Natural killer cell (primary cell): ENCODE measurements at regions of chr9 and their contacts with region 1.

Region 1: DNA sequence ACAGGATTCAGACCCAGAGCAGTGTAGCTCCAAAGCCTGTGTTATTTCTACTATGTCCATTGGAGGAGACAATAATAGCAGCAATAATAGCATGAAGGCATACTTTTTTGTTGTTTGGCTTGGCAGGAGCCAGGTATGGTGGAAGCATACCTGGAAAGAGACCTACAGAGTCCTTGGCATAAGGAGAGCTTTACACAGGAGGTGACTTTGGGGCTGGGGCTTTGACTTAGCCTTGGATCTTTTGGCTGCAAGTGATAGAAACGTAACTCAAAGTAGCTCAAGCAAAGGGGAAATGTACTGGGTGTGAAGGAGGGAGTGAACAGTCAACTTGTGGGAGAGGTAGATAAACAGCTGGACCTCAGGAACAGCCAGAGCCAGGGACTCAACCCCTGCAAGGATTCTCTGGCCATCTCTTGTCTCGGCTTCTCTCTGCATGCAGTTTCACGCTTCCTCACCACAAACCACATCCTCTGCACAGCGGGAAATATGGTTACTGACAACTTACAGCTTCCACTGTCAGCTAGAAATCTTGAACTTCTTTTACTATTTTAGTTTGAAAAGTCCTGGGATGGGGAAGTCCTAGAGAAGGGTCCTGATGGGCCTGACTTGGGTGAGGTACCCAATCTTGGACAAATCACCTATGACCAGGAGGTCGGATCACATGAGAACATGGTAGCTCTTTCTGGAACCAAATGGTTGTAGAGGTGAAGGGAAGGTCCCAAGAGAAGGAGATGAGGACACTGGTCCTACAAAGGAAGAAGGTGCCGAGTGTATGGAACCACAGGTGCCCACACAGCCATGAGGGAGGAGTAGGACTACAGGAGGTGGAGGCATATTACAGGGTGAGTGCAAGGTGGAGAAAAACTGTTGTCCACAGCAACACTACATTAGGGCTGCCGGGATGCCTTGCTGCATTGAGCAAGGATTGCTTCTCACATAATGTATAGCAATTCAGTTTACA is 47.0 kb upstream of the TGFBR1 start:
- DNase-seq: peak; percentile 81 to 89
- ATAC-seq: peak; percentile 47 to 78 (median 77)
- H3K4me3 ChIP-seq: peak overlapping the region; percentile 22
- H3K4me3 Mint-ChIP-seq: peak overlapping the region; percentile 96
- H3K27ac ChIP-seq: peak overlapping the region; percentile 82
- H3K27ac Mint-ChIP-seq: peak overlapping the region; percentile 93 to 97
- H3K4me1 ChIP-seq: peaks cover 71% of the 10 kb centered on the region
- H3K4me1 Mint-ChIP-seq: peaks cover 88 to 91% of the 10 kb centered on the region in 2 donors
- H3K27me3 ChIP-seq: no peaks in the 10 kb centered on the region
- H3K27me3 Mint-ChIP-seq: no peaks in the 10 kb centered on the region
- CTCF ChIP-seq: no peak

Region 2: GRCh38 chr9:99019790-99020331 is 38.1 kb before region 1 on chr9:
- intact Hi-C with region 1: loop called (anchors 5 kb)
- DNase-seq: no peak
- ATAC-seq: no peak
- H3K4me3 ChIP-seq: no peak overlapping the region
- H3K4me3 Mint-ChIP-seq: no peak overlapping the region
- H3K27ac ChIP-seq: no peak overlapping the region
- H3K27ac Mint-ChIP-seq: no peak overlapping the region
- H3K4me1 ChIP-seq: peaks cover 6% of the 10 kb centered on the region
- H3K4me1 Mint-ChIP-seq: peaks cover 40 to 42% of the 10 kb centered on the region in 2 donors
- H3K27me3 ChIP-seq: no peaks in the 10 kb centered on the region
- H3K27me3 Mint-ChIP-seq: peaks cover 0 to 4% of the 10 kb centered on the region in 2 donors
- CTCF ChIP-seq: no peak

Region 3: GRCh38 chr9:99040911-99041582 is 16.9 kb before region 1 on chr9:
- intact Hi-C with region 1: loop called (anchors 1 kb)
- DNase-seq: peak in 1 of 2 donors; percentile 33
- ATAC-seq: peak; percentile 77 to 85 (median 84)
- H3K4me3 ChIP-seq: no peak overlapping the region
- H3K4me3 Mint-ChIP-seq: peak overlapping the region; percentile 72
- H3K27ac ChIP-seq: peak overlapping the region; percentile 45
- H3K27ac Mint-ChIP-seq: peak overlapping the region; percentile 78 to 81
- H3K4me1 ChIP-seq: peaks cover 59% of the 10 kb centered on the region
- H3K4me1 Mint-ChIP-seq: peaks cover 68 to 72% of the 10 kb centered on the region in 2 donors
- H3K27me3 ChIP-seq: no peaks in the 10 kb centered on the region
- H3K27me3 Mint-ChIP-seq: no peaks in the 10 kb centered on the region
- CTCF ChIP-seq: no peak

Region 4: DNA sequence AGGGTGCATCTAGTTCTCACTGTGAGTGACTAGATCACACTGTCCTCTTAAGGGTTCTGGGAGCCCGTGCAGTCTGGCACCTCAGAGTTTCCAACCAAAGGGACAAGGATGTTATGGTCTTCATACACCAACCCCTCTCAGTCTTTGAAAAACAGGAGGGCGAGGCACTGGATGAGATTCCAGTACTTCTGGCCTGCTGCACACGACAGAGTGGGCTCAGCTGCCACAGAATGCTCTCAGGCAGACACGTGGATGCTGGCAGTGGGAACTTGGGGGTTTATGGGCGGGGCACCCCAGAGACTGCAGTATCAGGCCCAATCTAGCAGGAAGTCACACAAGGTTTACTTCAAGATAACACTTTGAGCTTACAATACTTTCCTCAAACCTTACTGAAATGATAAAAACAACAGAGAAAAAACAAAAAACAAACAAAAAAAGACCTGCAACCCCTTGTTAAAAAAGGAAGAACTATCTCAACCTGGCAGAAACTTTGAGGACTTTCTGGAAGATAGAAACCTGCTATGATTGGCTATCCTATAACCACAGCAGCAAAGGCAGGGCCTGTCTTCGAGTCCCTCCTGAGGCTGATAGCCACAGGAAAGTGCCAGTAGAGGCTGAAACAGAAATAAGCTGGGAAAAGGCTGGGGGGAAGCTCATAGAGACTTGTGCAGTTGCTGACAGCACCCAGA is 18.7 kb after region 1 on chr9:
- intact Hi-C with region 1: loop called (anchors 1 kb)
- DNase-seq: peak; percentile 60 to 76
- ATAC-seq: peak; percentile 93 to 97 (median 95)
- H3K4me3 ChIP-seq: no peak overlapping the region
- H3K4me3 Mint-ChIP-seq: peak overlapping the region; percentile 80
- H3K27ac ChIP-seq: peak overlapping the region; percentile 67
- H3K27ac Mint-ChIP-seq: peak overlapping the region; percentile 93 to 98
- H3K4me1 ChIP-seq: peaks cover 39% of the 10 kb centered on the region
- H3K4me1 Mint-ChIP-seq: peaks cover 67 to 73% of the 10 kb centered on the region in 2 donors
- H3K27me3 ChIP-seq: no peaks in the 10 kb centered on the region
- H3K27me3 Mint-ChIP-seq: no peaks in the 10 kb centered on the region
- CTCF ChIP-seq: no peak

Region 5: GRCh38 chr9:99104459-99105151 is 46.7 kb after region 1 on chr9 and contains the start of gene TGFBR1:
- intact Hi-C with region 1: loop called (anchors 1 kb)
- DNase-seq: peak; percentile 94 to 95
- ATAC-seq: peak; percentile 80 to 93 (median 88)
- H3K4me3 ChIP-seq: peak within 1 kb of the TSS; percentile 70
- H3K4me3 Mint-ChIP-seq: peak within 1 kb of the TSS; percentile 89
- H3K27ac ChIP-seq: peak within 1 kb of the TSS; percentile 77
- H3K27ac Mint-ChIP-seq: peak within 1 kb of the TSS; percentile 91 to 98
- H3K4me1 ChIP-seq: peaks cover 34% of the 10 kb centered on the region
- H3K4me1 Mint-ChIP-seq: peaks cover 84 to 86% of the 10 kb centered on the region in 2 donors
- H3K27me3 ChIP-seq: no peaks in the 10 kb centered on the region
- H3K27me3 Mint-ChIP-seq: no peaks in the 10 kb centered on the region
- CTCF ChIP-seq: no peak
- total RNA-seq, gene TGFBR1: 78.0 to 120 (median 113) TPM

Region 6: GRCh38 chr9:99385814-99386279 is 327.9 kb after region 1 on chr9:
- intact Hi-C with region 1: no loop called
- DNase-seq: no peak
- ATAC-seq: no peak
- H3K4me3 ChIP-seq: no peak overlapping the region
- H3K4me3 Mint-ChIP-seq: no peak overlapping the region
- H3K27ac ChIP-seq: no peak overlapping the region
- H3K27ac Mint-ChIP-seq: no peak overlapping the region
- H3K4me1 ChIP-seq: no peaks in the 10 kb centered on the region
- H3K4me1 Mint-ChIP-seq: no peaks in the 10 kb centered on the region
- H3K27me3 ChIP-seq: no peaks in the 10 kb centered on the region
- H3K27me3 Mint-ChIP-seq: peaks cover 4 to 11% of the 10 kb centered on the region in 2 donors
- CTCF ChIP-seq: no peak

Region 7: GRCh38 chr9:100098887-100099721 is 1041.2 kb after region 1 on chr9 and contains the starts of genes ERP44 and INVS:
- intact Hi-C with region 1: loop called (anchors 1 kb)
- DNase-seq: peak; percentile 91 to 98
- ATAC-seq: peak; percentile 97 to 100 (median 98)
- H3K4me3 ChIP-seq: peak within 1 kb of the TSS; percentile 73
- H3K4me3 Mint-ChIP-seq: peak within 1 kb of the TSS; percentile 99
- H3K27ac ChIP-seq: peak within 1 kb of the TSS; percentile 73
- H3K27ac Mint-ChIP-seq: peak within 1 kb of the TSS; percentile 95 to 99
- H3K4me1 ChIP-seq: peaks cover 19% of the 10 kb centered on the region
- H3K4me1 Mint-ChIP-seq: peaks cover 46 to 47% of the 10 kb centered on the region in 2 donors
- H3K27me3 ChIP-seq: no peaks in the 10 kb centered on the region
- H3K27me3 Mint-ChIP-seq: no peaks in the 10 kb centered on the region
- CTCF ChIP-seq: no peak
- total RNA-seq, gene ERP44: 14.2 to 15.4 (median 15.1) TPM
- total RNA-seq, gene INVS: 24.5 to 30.6 (median 27.4) TPM